CD14-positive monocyte (primary cell): ENCODE measurements at regions of chr9 and their contacts with region 1.

Region 1: DNA sequence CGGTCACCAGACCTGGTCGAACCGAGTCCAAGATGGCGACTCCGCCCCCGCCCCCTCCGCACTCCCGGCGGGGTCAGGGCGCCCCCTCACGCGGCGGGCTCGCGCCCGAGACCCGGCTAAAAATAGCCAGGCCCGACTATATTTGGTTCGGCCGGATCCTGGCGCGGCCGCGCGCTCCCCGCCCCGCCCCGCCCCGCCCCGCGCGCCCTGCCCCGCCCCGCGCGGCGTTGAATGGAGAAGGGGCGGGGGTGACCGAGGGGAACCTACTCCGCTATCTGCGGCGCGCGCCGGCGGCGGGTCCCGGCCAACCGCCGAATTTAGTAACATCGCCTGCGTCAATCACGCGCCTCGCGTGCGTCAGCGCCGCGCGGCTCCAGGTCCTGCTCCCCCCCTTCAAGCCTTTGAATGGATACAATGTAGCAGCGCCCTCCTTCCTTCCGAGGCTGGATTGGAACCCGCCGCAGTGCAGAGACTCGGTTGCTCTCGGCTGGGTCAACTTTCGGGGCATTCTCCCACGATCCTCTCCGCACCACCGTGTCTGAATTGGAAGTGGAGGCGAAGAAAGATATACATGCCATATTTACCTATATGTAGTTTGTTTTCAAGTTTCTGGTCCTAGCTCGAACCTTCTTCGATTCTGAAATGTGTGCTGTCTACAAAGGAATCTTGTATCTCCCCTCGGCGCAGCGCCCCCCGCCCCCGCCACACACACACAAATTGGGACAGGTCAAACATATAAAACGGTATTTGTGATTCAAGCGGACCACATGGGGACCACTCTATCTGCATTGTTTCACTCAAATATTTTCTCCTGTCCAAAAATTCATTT is 1.6 kb upstream of the NR4A3 start:
- DNase-seq: peak; percentile 96 to 98 (median 98)
- H3K4me3 ChIP-seq: peak overlapping the region; percentile 64 to 93 (median 66)
- H3K4me3 Mint-ChIP-seq: peak overlapping the region; percentile 100
- H3K27ac ChIP-seq: peak overlapping the region; percentile 81 to 94
- H3K27ac Mint-ChIP-seq: peak overlapping the region; percentile 97 to 100 (median 99)
- H3K4me1 ChIP-seq: peaks cover 53 to 56% of the 10 kb centered on the region in 2 donors
- H3K4me1 Mint-ChIP-seq: peaks cover 47% of the 10 kb centered on the region
- H3K27me3 ChIP-seq: peaks cover 22 to 31% of the 10 kb centered on the region in 2 donors
- H3K27me3 Mint-ChIP-seq: peaks cover 31 to 40% (median 36%) of the 10 kb centered on the region in 3 donors
- CTCF ChIP-seq: no peak

Region 2: DNA sequence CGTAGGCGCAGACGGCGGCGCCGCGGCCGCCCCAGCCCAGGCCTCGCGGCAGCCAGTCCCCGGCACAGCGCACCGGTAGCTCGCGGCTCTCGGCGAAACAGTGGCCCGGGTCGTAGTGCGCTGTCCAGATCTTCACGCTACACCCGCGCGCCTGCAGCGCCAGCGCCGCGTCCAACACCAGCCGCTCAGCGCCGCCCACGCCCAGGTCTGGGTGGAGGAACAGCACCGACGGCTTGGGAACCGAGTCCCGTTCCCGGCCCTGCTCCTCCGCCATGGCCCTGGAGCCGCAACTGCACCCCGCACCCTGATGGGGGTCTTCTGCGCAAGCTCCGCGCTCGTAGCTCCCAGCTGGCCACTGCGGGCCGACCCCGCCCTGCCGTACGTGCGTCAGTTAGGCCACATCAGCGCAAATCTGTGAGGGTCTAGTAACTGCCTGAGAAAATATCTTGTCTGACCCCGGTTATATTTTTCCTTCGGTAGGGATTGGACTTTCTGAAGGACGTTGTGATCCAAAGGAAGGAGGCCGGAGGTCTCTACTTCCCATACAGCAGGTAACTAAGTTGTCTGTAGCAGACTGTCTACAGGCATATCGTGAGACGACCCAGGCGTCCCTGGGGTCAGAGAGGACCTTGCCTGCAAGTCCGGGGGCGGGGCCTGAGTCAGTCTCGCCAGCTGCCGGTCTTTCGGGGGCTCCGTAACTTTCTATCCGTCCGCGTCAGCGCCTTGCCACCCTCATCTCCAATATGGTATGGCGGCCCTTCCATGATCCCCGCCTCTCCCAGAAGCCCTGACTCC is 598.3 kb before region 1 on chr9 and contains the starts of genes ALG2 and SEC61B:
- intact Hi-C with region 1: loop called in 1 of 2 experiments (anchors 10 kb)
- DNase-seq: peak; percentile 89 to 93 (median 92)
- H3K4me3 ChIP-seq: peak within 1 kb of the TSS; percentile 69 to 82 (median 80)
- H3K4me3 Mint-ChIP-seq: peak within 1 kb of the TSS; percentile 98 to 100
- H3K27ac ChIP-seq: peak within 1 kb of the TSS; percentile 83 to 96
- H3K27ac Mint-ChIP-seq: peak within 1 kb of the TSS; percentile 97 to 100 (median 100)
- H3K4me1 ChIP-seq: peaks cover 27 to 38% of the 10 kb centered on the region in 2 donors
- H3K4me1 Mint-ChIP-seq: peaks cover 42% of the 10 kb centered on the region
- H3K27me3 ChIP-seq: no peaks in the 10 kb centered on the region
- H3K27me3 Mint-ChIP-seq: peaks cover 0 to 2% (median 0%) of the 10 kb centered on the region in 3 donors
- CTCF ChIP-seq: no peak
- polyA plus RNA-seq, gene ALG2: 15.9 to 25.5 (median 23.6) TPM
- polyA plus RNA-seq, gene SEC61B: 117 to 443 (median 421) TPM

Region 3: GRCh38 chr9:99634186-99634585 is 185.9 kb before region 1 on chr9:
- intact Hi-C with region 1: loop called in 1 of 2 experiments (anchors 5 kb)
- DNase-seq: peak; percentile 46 to 81 (median 69)
- H3K4me3 ChIP-seq: no peak overlapping the region
- H3K4me3 Mint-ChIP-seq: peak overlapping the region in 1 of 2 donors; percentile 54
- H3K27ac ChIP-seq: peak overlapping the region in 1 of 2 donors; percentile 61
- H3K27ac Mint-ChIP-seq: peak overlapping the region; percentile 7 to 90 (median 81)
- H3K4me1 ChIP-seq: peaks cover 16 to 27% of the 10 kb centered on the region in 2 donors
- H3K4me1 Mint-ChIP-seq: peaks cover 28% of the 10 kb centered on the region
- H3K27me3 ChIP-seq: no peaks in the 10 kb centered on the region
- H3K27me3 Mint-ChIP-seq: peaks cover 0 to 2% (median 2%) of the 10 kb centered on the region in 3 donors
- CTCF ChIP-seq: no peak

Region 4: DNA sequence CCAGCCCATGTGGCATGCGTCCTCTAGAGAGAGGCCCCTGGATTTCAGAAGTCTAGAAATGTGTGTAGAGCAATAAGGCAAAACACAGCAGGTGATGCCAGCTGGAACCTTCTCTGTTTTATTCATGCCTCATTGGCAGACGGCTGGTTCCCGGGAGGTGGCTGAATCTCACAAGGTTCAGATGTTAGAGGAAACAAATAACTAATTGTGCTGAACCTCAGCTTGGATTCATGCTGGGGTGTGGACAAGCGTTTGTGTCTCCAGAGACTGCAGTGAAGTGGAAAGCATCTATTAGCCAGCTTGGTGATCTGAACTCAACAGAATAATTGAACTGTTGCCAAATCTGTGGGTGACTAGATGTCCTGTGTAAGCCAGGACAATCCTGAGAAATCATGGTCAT is 129.5 kb before region 1 on chr9:
- intact Hi-C with region 1: no loop called
- DNase-seq: no peak
- H3K4me3 ChIP-seq: no peak overlapping the region
- H3K4me3 Mint-ChIP-seq: no peak overlapping the region
- H3K27ac ChIP-seq: no peak overlapping the region
- H3K27ac Mint-ChIP-seq: no peak overlapping the region
- H3K4me1 ChIP-seq: no peaks in the 10 kb centered on the region
- H3K4me1 Mint-ChIP-seq: no peaks in the 10 kb centered on the region
- H3K27me3 ChIP-seq: no peaks in the 10 kb centered on the region
- H3K27me3 Mint-ChIP-seq: no peaks in the 10 kb centered on the region
- CTCF ChIP-seq: no peak

Region 5: GRCh38 chr9:100011062-100011681 is 191.1 kb after region 1 on chr9:
- intact Hi-C with region 1: loop called in 1 of 2 experiments (anchors 10 kb)
- DNase-seq: peak; percentile 43 to 61 (median 58)
- H3K4me3 ChIP-seq: no peak overlapping the region
- H3K4me3 Mint-ChIP-seq: no peak overlapping the region
- H3K27ac ChIP-seq: no peak overlapping the region
- H3K27ac Mint-ChIP-seq: no peak overlapping the region
- H3K4me1 ChIP-seq: no peaks in the 10 kb centered on the region
- H3K4me1 Mint-ChIP-seq: no peaks in the 10 kb centered on the region
- H3K27me3 ChIP-seq: no peaks in the 10 kb centered on the region
- H3K27me3 Mint-ChIP-seq: no peaks in the 10 kb centered on the region
- CTCF ChIP-seq: peak; percentile 82